ENCODE measurements at regions of chr5 and their contacts with region 1.

Region 1: DNA sequence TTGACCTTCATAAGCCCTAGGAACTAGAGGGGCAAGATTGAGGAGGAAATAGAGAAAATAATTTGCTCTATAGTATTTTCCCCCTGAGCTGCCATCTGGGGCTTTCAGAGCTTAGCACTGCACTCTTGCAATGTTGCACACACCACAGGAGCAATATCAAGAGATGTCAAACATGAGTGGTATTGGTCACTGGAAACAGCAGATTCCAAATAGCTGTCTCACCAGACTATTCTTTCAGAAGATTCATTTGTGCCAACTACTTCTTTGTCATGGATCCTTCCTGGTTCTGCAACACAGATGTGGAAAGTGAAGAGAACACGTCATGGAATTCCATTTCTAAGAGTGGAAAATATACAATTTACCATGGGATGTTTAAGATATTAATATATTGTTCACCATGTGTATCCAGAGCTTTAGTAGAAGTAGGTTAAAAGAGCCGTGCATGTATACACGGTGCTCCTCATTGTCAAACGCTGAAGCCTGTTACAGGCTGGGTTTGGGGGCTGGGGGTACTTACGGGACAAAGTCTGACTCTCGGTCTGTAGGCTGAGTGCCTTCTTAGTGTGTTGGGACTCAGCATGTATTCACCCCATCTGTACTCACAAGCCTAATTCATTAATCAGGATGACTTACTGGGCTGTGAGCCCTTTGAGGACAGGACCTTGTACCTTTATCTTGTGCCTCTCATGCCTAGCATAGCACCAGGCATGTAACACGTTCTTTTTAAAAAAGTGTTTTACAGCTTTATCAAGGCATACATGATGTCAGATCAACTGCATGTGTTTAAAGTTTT is 31.4 kb upstream of the GDNF start:
- DNase-seq: no peak
- H3K4me3 ChIP-seq: no peak overlapping the region
- H3K27ac ChIP-seq: no peak overlapping the region
- H3K4me1 ChIP-seq: no peaks in the 10 kb centered on the region
- H3K27me3 ChIP-seq: no peaks in the 10 kb centered on the region
- CTCF ChIP-seq: no peak
- EP300 ChIP-seq: no peak
- POLR2A ChIP-seq: no peak

Region 2: DNA sequence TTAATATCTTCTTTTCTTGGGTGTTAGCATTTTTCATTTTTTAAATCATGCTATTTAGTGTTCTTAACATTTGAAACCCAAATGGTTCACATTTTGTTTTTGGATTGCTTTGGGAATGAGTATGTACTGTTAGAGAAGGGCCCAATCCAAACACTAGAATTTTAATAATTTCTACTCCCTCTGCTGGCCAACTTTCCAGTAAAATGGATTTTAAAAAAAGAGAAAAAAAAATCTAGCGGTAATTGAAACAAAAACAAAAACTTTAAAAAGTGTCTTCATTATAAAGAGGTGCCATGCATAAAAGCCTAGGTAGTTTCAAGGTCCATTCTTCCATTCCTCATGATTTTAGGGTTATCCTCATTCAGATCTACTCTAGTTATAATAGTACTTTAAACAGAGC is 1235.1 kb after region 1 on chr5:
- in situ Hi-C with region 1: no loop called
- intact Hi-C with region 1: loop called (anchors 5 kb)
- DNase-seq: no peak
- H3K4me3 ChIP-seq: no peak overlapping the region
- H3K27ac ChIP-seq: no peak overlapping the region
- H3K4me1 ChIP-seq: no peaks in the 10 kb centered on the region
- H3K27me3 ChIP-seq: no peaks in the 10 kb centered on the region
- CTCF ChIP-seq: peak in 1 of 5 experiments; percentile 18
- EP300 ChIP-seq: no peak
- POLR2A ChIP-seq: no peak

Measured in transverse colon (tissue), 4 donors.